ENCODE measurements at regions of chr1 and their contacts with region 1.

Region 1: GRCh38 chr1:92476071-92476631 is 10.6 kb downstream of the GFI1 start:
- DNase-seq: no peak
- H3K4me3 Mint-ChIP-seq: no peak overlapping the region
- H3K27ac Mint-ChIP-seq: no peak overlapping the region
- H3K4me1 Mint-ChIP-seq: peaks cover 5% of the 10 kb centered on the region
- H3K27me3 Mint-ChIP-seq: peaks cover 81% of the 10 kb centered on the region
- CTCF ChIP-seq: no peak

Region 2: GRCh38 chr1:92447033-92447681 is 29.0 kb before region 1 on chr1:
- CTCF ChIA-PET with region 1: interaction called, 12 read pairs
- intact Hi-C with region 1: no loop called
- DNase-seq: no peak
- H3K4me3 Mint-ChIP-seq: no peak overlapping the region
- H3K27ac Mint-ChIP-seq: no peak overlapping the region
- H3K4me1 Mint-ChIP-seq: peaks cover 7% of the 10 kb centered on the region
- H3K27me3 Mint-ChIP-seq: peaks cover 32% of the 10 kb centered on the region
- CTCF ChIP-seq: no peak

Measured in Calu3 (cell line).